ENCODE measurements at regions of chr20 and their contacts with region 1.

Region 1: GRCh38 chr20:23668477-23668951 is 20.3 kb downstream of the CST4 start:
- DNase-seq: no peak
- H3K4me3 ChIP-seq: no peak overlapping the region
- H3K27ac ChIP-seq: no peak overlapping the region
- H3K4me1 ChIP-seq: no peaks in the 10 kb centered on the region
- H3K27me3 ChIP-seq: no peaks in the 10 kb centered on the region
- CTCF ChIP-seq: peak; percentile 56 to 82 (median 68)

Region 2: DNA sequence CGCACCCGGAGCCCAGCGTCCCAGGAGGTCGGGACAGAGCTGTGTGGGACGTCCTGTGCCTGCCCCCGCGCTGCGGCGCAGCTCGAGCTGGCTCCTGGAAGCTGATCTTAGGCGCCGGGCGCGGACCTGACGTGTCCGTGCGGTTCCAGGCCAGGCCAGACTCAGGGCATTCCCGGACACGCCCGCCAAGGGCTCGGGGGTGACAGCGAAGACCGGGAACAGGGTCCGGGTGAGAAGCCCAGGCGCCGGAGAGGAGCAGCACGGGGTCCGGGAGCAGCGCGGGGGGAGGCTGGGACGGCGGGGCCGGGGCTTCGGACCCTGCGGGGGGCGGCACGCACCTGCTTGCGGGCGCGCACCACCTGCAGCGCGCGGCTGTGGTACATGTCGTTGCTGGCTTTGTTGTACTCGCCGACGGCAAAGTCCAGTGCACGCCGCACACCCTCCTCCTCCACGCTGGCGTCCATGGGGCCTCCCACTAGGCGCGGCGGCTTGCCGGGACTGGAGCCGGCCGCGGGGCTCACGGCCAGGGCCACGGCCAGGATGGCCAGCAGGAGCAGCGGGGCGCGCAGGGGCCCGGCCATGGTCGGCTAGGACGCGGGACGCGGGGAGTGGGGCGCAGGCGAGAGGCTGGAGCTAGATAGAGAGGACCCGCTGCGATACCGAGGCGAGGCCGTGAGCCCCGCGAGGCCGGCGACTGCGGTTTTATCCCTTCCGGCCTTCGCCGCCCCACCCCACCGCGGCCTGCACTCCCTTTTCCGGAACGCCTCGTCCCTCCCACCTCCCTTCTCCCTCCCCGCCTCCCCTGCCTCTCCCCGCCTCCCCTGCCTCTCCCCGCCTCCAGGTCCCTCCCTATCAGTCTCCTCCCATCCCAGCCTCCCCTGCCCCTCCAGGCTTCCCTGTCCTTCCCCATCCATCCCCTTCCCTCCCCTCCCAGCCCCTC is 31.0 kb before region 1 on chr20 and contains the start of gene CST3:
- intact Hi-C with region 1: no loop called
- DNase-seq: peak; percentile 55 to 93
- H3K4me3 ChIP-seq: peak within 1 kb of the TSS; percentile 89 to 94
- H3K27ac ChIP-seq: peak within 1 kb of the TSS; percentile 91 to 99
- H3K4me1 ChIP-seq: peaks cover 10 to 22% of the 10 kb centered on the region in 2 donors
- H3K27me3 ChIP-seq: no peaks in the 10 kb centered on the region
- CTCF ChIP-seq: peak in 1 of 3 experiments; percentile 9
- total RNA-seq, gene CST3: 2,609 TPM

Region 3: DNA sequence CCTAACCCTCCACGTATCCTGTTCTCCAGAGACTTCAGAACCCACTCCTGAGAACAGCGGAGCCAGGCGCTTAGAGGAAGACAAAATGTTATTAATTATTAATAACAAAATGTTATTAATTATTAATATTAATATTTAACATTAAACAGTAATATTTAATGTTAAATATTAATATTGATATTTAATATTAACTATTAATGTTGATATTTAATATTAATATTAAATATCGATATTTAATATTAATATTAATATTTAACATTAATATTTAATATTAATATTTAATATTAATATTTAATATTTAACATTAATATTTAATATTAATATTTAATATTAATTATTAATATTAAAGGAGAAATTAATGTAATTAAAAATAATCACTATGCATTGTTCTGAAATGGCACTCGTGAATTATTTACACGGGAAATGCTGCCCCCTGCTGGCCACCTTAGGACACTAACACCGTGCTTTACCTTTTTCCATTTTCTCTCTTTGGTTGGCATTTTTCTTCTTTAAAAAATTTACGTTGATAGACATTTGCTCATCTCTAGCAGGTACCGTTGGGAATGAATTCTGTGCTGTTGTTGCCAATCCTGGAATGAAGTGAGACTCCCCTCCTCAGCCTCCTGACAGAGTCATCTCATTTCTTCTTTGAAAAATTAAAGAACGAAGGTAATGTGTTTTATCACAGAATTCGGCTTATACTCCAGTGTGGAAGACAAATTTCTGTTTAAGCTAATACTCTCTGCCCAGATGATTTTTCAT is 327.6 kb after region 1 on chr20:
- intact Hi-C with region 1: loop called (anchors 5 kb)
- DNase-seq: no peak
- H3K4me3 ChIP-seq: no peak overlapping the region
- H3K27ac ChIP-seq: no peak overlapping the region
- H3K4me1 ChIP-seq: no peaks in the 10 kb centered on the region
- H3K27me3 ChIP-seq: no peaks in the 10 kb centered on the region
- CTCF ChIP-seq: peak; percentile 20 to 78 (median 65)

Region 4: DNA sequence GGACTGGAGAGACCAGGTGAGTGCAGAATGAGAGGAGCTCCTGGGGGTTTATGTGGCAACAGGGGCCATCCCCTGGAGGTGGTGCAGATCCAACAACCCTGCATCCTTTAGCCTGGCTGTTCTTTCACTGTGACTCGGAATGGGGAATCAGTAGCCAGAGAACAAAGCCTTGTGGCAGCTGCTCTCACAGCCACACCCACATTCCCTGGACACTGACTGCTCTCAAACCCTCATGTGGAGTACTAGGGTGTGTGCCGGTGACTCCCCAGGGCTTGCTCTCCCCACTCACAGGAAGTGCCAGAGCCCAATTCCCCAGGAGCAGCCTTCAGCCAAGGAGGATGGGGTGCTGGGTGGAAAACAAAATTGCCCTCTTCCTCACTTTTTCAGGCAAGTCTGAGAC is 350.3 kb after region 1 on chr20:
- intact Hi-C with region 1: no loop called
- DNase-seq: no peak
- H3K4me3 ChIP-seq: no peak overlapping the region
- H3K27ac ChIP-seq: no peak overlapping the region
- H3K4me1 ChIP-seq: no peaks in the 10 kb centered on the region
- H3K27me3 ChIP-seq: no peaks in the 10 kb centered on the region
- CTCF ChIP-seq: no peak

Measured in ascending aorta (tissue), 2 donors.